ENCODE measurements at regions of chr10 and their contacts with region 1.

Region 1: DNA sequence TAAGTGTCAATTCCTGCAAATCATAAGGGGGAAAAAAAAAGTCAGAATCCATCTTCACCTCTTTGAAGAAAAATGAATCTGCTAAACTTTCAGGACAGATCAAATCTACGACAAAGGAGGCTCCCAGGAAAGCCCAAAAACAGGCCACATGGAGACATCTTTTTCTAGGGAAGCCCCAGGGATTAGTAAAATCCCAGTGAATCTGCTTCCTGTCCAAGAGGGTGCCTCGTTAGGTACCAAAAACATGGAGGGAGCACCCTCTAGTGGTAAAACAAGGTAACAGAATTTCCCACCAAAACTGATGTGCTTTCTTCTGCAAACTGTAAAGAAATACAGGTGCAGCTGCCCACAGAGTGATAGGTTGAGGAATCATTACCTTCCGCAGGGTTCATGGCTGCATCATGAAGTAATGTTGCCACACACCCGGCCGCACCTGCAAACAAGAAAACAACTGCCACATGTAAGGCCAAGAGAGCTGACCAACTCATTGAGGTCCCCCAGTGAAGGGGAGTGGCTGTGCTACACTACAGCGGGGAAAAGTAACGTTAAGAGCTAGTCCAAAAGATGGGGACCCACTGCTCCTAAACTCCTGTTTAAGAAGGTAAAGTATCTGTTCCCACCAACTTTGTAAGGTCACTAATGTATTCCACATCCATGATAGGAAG is 7.9 kb downstream of the SLC25A28 start:
- DNase-seq: no peak
- ATAC-seq: peak; percentile 65

Region 2: DNA sequence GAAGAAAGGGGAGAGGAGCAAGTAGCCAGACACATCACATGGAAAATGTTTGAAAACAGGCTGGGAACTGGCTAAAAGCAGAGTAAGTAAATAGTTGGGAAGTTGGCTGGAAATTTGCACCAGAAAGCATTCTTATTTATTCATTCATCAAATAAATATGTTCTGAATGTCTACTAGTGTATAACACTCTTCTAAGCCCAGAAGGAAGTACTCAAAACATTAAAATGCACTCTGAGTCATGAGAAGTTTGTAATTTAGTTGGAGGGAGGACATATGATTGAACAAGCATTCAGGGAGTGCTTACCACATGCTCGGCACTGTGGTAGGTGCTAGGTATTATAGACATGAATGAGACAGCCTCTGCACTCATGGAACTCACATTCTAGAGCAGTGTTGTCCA is 320.1 kb before region 1 on chr10:
- intact Hi-C with region 1: no loop called
- DNase-seq: no peak
- ATAC-seq: no peak

Region 3: DNA sequence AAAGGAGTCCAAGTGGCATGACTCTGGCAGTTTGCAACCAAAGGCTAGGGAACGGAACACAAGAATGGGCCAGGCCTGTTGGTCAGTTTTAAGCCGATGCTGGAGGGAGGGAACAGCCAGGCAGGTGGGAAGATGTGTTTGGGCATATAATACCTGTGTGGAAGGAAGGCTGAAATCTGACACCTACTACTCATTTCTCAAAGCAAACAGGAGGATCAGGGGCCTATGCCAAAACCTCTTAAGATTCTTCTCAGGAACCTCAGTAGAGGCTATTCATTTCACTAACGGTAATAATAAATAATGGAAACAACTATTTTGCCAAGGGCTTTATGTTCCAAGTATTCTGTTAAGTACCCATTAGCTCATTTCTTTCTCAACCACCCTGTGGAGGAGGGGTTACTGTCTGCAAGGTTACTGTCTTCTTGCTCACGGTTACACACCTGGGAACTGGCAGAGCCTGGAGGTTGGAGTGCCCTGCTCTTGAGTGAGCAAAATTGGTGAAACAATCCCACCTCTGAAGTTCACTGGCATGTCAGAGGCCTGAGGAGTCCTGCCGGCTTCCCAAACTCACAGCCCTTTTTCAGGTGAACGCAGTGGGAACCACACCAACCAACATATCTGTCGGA is 217.4 kb before region 1 on chr10:
- intact Hi-C with region 1: loop called (anchors 5 kb)
- DNase-seq: no peak
- ATAC-seq: no peak

Region 4: DNA sequence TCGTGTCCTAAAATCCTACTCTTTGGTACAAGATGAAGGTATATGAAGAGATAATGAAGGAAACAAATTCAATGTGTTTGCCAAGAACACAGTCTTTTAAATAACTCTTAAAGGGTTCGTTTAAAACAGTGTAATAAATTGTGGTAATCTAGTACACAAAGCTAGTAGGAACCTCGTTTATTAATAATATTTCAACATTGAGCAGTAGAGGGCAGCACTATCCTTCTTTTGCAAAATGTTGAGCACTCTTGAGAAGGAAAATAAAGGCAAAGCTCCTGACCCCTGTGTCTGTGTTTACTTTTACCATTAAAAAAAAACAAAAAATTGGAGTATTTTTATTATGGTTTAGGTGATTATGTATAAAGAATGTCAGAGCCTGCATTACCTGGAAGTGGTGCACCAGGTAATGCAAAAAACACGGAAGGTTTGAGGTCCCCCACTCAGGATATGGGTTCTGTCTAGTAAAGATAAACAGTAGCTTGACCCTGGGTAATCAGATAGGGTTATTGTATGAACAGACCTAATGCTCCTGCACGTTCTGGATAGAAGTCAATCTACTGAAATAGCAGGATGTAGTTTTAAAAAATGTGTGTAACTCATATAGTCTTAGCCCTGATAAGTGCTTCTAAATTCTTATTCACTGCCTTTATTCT is 176.2 kb before region 1 on chr10:
- intact Hi-C with region 1: loop called (anchors 5 kb)
- DNase-seq: no peak
- ATAC-seq: peak; percentile 51